ENCODE measurements at regions of chr1 and their contacts with region 1.

Region 1: DNA sequence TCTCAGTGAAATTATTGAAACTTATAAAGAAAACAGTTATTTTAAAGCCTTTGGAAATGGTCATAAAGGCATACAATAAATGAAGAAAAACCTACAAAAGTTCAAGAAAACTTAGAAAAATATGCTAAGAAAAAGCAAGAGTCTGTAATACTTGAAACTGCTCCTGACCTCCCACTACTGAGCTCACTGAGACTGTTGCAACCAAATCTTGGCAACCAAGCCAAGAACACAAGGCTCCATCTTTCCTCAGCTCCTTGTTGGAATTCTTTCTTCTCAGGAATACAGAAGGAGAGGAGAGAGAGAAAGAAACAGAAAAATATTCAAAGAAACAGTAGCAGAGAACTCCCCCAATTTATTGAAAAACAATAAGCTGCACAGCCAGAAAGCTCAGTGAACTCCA is 160.5 kb downstream of the RASAL2 start:
- DNase-seq: no peak
- H3K4me3 ChIP-seq: peak overlapping the region in 1 of 4 experiments; percentile 11; a peak in 1 of 8 replicates
- H3K27ac ChIP-seq: no peak overlapping the region
- H3K4me1 ChIP-seq: peaks cover 0 to 11% (median 6%) of the 10 kb centered on the region in 4 experiments; a peak in 5 of 7 replicates
- H3K27me3 ChIP-seq: no peaks in the 10 kb centered on the region
- CTCF ChIP-seq: no peak
- EP300 ChIP-seq: no peak
- POLR2A ChIP-seq: no peak
- RAD21 ChIP-seq: no peak

Region 2: GRCh38 chr1:178055779-178056471 is 198.5 kb before region 1 on chr1:
- CTCF ChIA-PET with region 1: no interaction called
- POLR2A ChIA-PET with region 1: no interaction called
- DNase-seq: no peak
- H3K4me3 ChIP-seq: no peak overlapping the region
- H3K27ac ChIP-seq: no peak overlapping the region
- H3K4me1 ChIP-seq: peaks cover 4 to 28% (median 10%) of the 10 kb centered on the region in 4 experiments; a peak in 6 of 7 replicates
- H3K27me3 ChIP-seq: no peaks in the 10 kb centered on the region
- CTCF ChIP-seq: peak in 2 of 3 experiments; percentile 16 to 23; a peak in 2 of 4 replicates
- EP300 ChIP-seq: no peak
- POLR2A ChIP-seq: no peak
- RAD21 ChIP-seq: peak in 1 of 2 experiments; percentile 10; a peak in 1 of 4 replicates

Region 3: GRCh38 chr1:178241837-178242236 is 12.6 kb before region 1 on chr1:
- CTCF ChIA-PET with region 1: interaction called, 14 read pairs
- POLR2A ChIA-PET with region 1: interaction called, 5 read pairs
- DNase-seq: no peak
- H3K4me3 ChIP-seq: no peak overlapping the region
- H3K27ac ChIP-seq: no peak overlapping the region
- H3K4me1 ChIP-seq: peaks cover 0 to 3% (median 0%) of the 10 kb centered on the region in 4 experiments; a peak in 1 of 7 replicates
- H3K27me3 ChIP-seq: no peaks in the 10 kb centered on the region
- CTCF ChIP-seq: no peak
- EP300 ChIP-seq: no peak
- POLR2A ChIP-seq: no peak
- RAD21 ChIP-seq: no peak

Region 4: GRCh38 chr1:178371235-178371634 is 116.8 kb after region 1 on chr1:
- CTCF ChIA-PET with region 1: no interaction called
- POLR2A ChIA-PET with region 1: no interaction called
- DNase-seq: no peak
- H3K4me3 ChIP-seq: peak overlapping the region in 3 of 4 experiments; percentile 2 to 38 (median 10); a peak in 4 of 8 replicates
- H3K27ac ChIP-seq: no peak overlapping the region
- H3K4me1 ChIP-seq: peaks cover 0 to 7% (median 6%) of the 10 kb centered on the region in 4 experiments; a peak in 3 of 7 replicates
- H3K27me3 ChIP-seq: no peaks in the 10 kb centered on the region
- CTCF ChIP-seq: no peak
- EP300 ChIP-seq: no peak
- POLR2A ChIP-seq: no peak
- RAD21 ChIP-seq: no peak

Measured in H1 (cell line).